Right ventricle myocardium superior (tissue), 1 donor: ENCODE measurements at regions of chr20 and their contacts with region 1.

Region 1: GRCh38 chr20:13819885-13820645 is 35.2 kb downstream of the NDUFAF5 start:
- DNase-seq: no peak
- ATAC-seq: peak; percentile 75

Region 2: GRCh38 chr20:13029687-13030510 is 790.2 kb before region 1 on chr20:
- intact Hi-C with region 1: no loop called
- DNase-seq: no peak
- ATAC-seq: no peak

Region 3: GRCh38 chr20:13684566-13685222 is 135.4 kb before region 1 on chr20:
- intact Hi-C with region 1: no loop called
- DNase-seq: no peak
- ATAC-seq: no peak

Region 4: GRCh38 chr20:14051454-14051853 is 231.4 kb after region 1 on chr20:
- intact Hi-C with region 1: loop called (anchors 5 kb)
- DNase-seq: no peak
- ATAC-seq: no peak